HEK293 (cell line): ENCODE measurements at regions of chr4 and their contacts with region 1.

Region 1: DNA sequence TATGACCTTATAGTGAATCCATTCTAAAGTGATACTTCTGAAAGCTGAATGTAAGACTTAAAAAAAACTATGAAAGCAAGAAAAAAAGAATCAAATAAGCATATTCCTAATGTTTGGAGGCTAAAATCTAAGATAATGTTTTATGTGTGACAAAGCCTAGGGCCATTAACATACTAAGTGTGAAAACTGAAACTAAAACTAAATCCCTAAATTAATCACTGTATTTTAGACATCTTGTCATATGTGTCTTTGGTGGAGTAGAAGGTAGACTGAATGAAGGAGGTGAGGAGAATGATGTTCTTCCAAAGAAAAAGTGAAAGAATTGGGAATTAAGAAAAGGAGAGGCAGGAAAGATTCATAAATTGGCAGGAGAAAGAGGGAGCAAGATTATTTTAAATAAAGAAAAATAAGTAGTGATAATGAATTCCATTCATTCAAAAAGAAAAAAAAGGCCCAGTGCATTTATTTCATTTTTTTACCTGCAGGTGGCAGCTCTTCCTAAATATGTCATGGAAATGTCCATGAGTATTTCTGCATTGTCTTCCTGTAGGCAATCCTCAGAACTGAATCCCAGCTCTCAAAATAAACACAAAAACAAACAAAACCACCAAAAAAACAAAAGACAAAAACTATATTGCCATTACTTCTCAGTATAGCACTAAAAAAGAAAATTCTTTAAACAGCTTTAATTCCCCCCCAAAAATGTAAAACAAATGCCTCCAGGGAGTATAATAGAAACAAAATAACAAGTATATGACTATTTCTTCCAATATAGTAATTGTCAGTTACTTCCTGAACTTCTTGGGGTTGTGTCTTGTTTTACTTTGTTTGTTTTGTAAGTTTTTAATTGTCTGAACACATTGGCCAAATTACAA is 17.0 kb upstream of the AP1AR start:
- H3K4me3 ChIP-seq: no peak overlapping the region
- H3K27ac ChIP-seq: no peak overlapping the region
- H3K4me1 ChIP-seq: no peaks in the 10 kb centered on the region
- CTCF ChIP-seq: no peak

Region 2: DNA sequence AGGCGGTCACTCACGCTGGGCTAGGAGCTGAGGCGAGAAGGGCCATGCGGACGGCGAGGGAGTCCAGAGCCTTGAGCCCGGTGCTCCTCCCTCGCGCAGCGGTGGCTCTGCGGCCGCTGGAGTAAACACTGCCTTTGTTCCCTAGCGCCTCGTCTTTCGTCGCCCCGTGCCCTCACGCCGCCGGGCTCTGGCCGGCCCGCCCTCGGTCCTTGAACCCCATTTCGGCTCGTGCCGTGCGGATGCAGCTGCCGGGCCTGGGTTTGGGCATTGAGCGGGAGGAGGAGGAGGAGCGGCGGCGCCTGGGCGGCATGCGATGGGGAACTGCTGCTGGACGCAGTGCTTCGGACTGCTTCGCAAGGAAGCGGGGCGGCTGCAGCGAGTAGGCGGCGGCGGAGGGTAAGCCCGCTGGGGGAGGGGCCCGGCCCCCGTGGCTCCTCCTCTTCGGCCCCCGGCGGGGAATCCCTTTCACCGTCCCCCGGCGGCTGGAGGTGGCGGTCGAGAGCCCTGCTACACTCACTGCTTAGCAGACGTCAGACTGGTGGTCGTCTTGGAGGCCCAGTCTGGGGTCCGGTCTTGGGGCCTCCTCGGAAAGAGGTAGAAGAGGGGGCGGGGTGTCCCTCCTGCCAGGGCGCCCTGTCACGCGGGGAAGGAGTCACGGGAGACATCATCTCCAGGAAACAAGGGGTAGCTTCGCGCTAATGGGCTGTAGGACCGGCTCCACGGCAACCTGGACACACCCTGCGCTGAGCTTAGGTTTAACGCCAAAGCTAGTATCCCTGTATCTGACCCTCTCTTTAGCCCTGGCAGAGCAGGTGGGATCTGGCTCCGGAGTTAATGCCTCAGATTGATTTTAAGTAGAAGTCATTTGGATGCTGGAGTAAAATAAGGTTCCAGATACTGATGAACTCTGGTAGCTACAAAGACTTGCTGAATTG is 17.4 kb after region 1 on chr4 and contains the start of gene AP1AR:
- CTCF ChIA-PET with region 1: interaction called, 14 read pairs
- POLR2A ChIA-PET with region 1: interaction called, 4 read pairs
- H3K4me3 ChIP-seq: peak within 1 kb of the TSS; percentile 65
- H3K27ac ChIP-seq: peak within 1 kb of the TSS; percentile 72
- H3K4me1 ChIP-seq: no peaks in the 10 kb centered on the region
- CTCF ChIP-seq: peak; percentile 60; the same call in 1 of the 2 replicates